ENCODE measurements at regions of chr6 and their contacts with region 1.

Region 1: GRCh38 chr6:28940858-28941680 is 17.3 kb upstream of the TRIM27 start:
- DNase-seq: peak; percentile 96
- ATAC-seq: peak; percentile 69
- H3K4me3 ChIP-seq: peak overlapping the region; percentile 95
- H3K27ac ChIP-seq: peak overlapping the region; percentile 60
- H3K4me1 ChIP-seq: peaks cover 4% of the 10 kb centered on the region; the same call in 1 of the 2 replicates
- H3K27me3 ChIP-seq: no peaks in the 10 kb centered on the region
- CTCF ChIP-seq: no peak

Region 2: DNA sequence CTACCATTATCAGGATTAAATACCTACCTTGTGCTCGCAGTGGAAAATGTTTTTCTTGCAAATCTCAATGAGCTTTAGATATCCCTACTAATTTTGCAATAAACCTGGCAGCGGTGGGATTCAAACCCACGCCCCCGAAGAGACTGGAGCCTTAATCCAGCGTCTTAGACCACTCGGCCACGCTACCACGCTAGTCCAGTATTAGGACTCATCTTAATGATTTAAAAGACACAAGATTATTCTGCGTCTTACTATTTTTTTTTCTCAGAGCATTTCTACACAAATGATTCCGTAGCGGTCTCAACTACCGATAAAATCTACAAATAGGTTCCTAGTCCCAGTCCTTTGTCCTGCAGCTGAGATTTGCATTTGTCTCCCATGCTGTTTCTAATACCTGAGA is 462.6 kb before region 1 on chr6:
- CTCF ChIA-PET with region 1: no interaction called
- POLR2A ChIA-PET with region 1: no interaction called
- intact Hi-C with region 1: no loop called
- DNase-seq: no peak
- ATAC-seq: no peak
- H3K4me3 ChIP-seq: no peak overlapping the region
- H3K27ac ChIP-seq: no peak overlapping the region
- H3K4me1 ChIP-seq: 0 out of 2 replicates have a peak, but pooled peaks cover 6% of the 10 kb centered on the region
- H3K27me3 ChIP-seq: peaks cover 65% of the 10 kb centered on the region
- CTCF ChIP-seq: no peak

Region 3: DNA sequence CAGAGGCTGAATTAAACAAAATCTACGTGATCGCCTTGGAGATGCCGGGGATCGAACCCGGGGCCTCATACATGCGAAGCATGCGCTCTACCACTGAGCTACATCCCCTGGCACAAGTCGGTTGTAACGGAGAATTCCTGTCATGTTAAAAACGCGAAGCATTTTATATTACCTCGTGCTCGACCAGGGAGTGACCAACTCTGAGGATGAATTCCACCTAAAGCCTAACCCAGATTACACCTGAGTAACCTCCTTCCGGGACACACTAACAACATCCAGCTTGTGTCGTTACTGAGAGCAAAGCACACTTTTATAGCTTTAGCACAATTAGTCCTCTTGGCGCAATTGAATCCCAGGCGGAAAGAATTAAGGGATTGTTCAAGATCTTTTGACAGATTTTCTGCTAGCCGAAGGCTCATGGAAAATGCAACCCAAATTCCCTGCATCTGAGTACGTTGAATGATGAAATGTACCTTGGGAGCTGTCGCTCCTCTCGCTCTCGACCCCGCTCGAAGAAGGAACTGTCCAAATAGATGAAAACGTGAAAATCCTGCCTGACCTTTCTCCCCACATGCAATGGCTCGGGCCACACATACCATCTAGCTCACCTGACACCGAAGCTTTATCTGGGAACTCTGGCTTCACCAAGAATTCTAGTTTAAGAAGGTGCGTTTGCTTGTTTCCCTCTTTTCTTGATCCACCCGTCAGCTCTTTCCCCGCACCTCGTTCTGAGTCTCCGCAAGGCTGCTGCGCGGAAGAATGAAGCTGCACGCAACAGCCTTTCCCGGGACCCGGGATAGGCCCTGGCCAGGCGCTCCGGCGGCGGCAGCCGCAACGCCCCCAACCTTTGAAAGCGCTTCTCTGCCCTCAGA is 267.0 kb before region 1 on chr6:
- CTCF ChIA-PET with region 1: no interaction called
- POLR2A ChIA-PET with region 1: no interaction called
- intact Hi-C with region 1: no loop called
- DNase-seq: peak; percentile 92
- ATAC-seq: peak; percentile 92
- H3K4me3 ChIP-seq: peak overlapping the region; percentile 73
- H3K27ac ChIP-seq: no peak overlapping the region
- H3K4me1 ChIP-seq: no peaks in the 10 kb centered on the region
- H3K27me3 ChIP-seq: no peaks in the 10 kb centered on the region
- CTCF ChIP-seq: no peak

Region 4: DNA sequence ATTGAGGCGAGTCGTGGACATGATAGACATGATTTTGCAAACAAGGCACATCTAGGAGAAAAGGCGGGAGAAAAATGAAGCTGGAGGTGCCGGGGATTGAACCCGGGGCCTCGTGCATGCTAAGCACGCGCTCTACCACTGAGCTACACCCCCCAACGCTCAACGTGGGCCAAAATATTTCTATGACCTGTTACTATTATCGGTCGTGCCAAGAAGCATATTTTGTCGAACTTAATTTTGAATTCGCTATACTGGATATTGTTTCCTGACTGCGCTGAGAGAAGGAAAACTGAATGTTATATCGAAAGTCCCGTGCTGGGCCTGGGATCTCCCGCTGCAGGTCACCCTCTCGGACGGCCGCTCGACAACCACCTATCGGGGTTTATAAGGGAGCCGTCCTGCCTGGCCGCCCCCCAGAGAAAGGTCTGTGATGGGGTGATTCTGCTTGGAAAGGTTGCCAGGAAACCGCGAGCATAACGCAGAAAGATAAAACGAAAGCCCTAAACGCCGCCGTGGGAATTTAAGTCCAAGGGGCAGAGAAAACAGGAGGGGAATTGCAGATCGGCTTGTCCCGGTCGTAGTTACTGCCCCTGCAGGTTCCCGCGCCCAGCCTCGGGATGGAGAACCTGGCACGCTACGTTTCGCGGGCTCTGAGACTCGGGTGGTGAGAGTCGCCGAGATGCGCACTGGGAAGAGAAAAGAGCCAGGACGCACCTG is 77.3 kb before region 1 on chr6:
- CTCF ChIA-PET with region 1: interaction called, 4 read pairs
- POLR2A ChIA-PET with region 1: no interaction called
- intact Hi-C with region 1: loop called (anchors 2 kb)
- DNase-seq: peak; percentile 91
- ATAC-seq: peak; percentile 61
- H3K4me3 ChIP-seq: peak overlapping the region; percentile 87
- H3K27ac ChIP-seq: peak overlapping the region; percentile 22; the same call in 1 of the 2 replicates
- H3K4me1 ChIP-seq: peaks cover 29% of the 10 kb centered on the region
- H3K27me3 ChIP-seq: no peaks in the 10 kb centered on the region
- CTCF ChIP-seq: no peak

Region 5: DNA sequence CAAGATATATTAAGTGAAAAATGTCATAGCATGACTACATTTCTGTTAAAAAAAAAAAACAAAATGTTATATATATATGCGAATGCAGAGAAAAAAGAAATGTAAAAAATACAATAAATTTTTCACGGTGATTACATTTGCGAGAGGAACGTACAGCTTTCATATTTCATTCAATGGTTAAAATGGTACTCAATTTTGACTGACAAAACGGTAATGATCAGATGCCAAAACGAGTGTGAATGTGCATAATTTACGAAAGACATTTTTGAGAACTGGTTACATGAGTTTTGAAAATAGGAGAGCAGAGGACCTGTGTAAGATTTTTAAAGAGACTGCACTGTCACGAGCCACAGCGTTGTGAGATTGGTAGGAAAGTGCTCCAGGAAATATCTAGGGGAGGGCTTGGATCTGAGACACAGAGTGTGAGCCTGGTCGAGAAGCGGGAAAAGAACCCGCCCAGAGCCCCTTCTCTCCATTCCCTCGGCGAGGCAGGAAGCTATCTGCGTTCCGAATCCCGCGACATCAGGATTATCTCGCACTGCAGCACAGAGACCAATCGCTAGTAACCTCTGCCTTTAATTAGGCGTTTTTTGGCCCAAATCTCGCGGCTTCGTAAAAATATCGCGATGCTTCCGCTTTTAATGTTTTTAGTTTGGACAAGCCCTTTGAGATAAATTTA is 45.8 kb before region 1 on chr6:
- CTCF ChIA-PET with region 1: no interaction called
- POLR2A ChIA-PET with region 1: no interaction called
- intact Hi-C with region 1: loop called (anchors 1 kb)
- DNase-seq: peak; percentile 98
- ATAC-seq: peak; percentile 62
- H3K4me3 ChIP-seq: peak overlapping the region; percentile 83
- H3K27ac ChIP-seq: peak overlapping the region; percentile 80
- H3K4me1 ChIP-seq: peaks cover 10% of the 10 kb centered on the region
- H3K27me3 ChIP-seq: no peaks in the 10 kb centered on the region
- CTCF ChIP-seq: no peak

Region 6: GRCh38 chr6:28953039-28953584 is 12.0 kb after region 1 on chr6:
- CTCF ChIA-PET with region 1: no interaction called
- POLR2A ChIA-PET with region 1: no interaction called
- intact Hi-C with region 1: loop called (anchors 1 kb)
- DNase-seq: peak; percentile 85
- ATAC-seq: peak; percentile 73
- H3K4me3 ChIP-seq: peak overlapping the region; percentile 82
- H3K27ac ChIP-seq: 0 out of 2 replicates have a peak overlapping the region, but pooled peaks have one; percentile 13
- H3K4me1 ChIP-seq: peaks cover 14% of the 10 kb centered on the region
- H3K27me3 ChIP-seq: no peaks in the 10 kb centered on the region
- CTCF ChIP-seq: no peak

Region 7: GRCh38 chr6:29016559-29017427 is 75.7 kb after region 1 on chr6:
- CTCF ChIA-PET with region 1: interaction called, 4 read pairs
- POLR2A ChIA-PET with region 1: no interaction called
- intact Hi-C with region 1: loop called (anchors 1 kb)
- DNase-seq: peak; percentile 91
- ATAC-seq: peak; percentile 90
- H3K4me3 ChIP-seq: peak overlapping the region; percentile 94
- H3K27ac ChIP-seq: no peak overlapping the region
- H3K4me1 ChIP-seq: no peaks in the 10 kb centered on the region
- H3K27me3 ChIP-seq: no peaks in the 10 kb centered on the region
- CTCF ChIP-seq: peak; percentile 96

Measured in PC-3 (cell line).